Activated CD8-positive, alpha-beta T cell treated with anti-CD3 and anti-CD28 coated beads, Interleukin-2, amount 10 ng/mL, durations not matched to agents 7 days and 5 days (primary cell): ENCODE measurements at regions of chr2 and their contacts with region 1.

Region 1: DNA sequence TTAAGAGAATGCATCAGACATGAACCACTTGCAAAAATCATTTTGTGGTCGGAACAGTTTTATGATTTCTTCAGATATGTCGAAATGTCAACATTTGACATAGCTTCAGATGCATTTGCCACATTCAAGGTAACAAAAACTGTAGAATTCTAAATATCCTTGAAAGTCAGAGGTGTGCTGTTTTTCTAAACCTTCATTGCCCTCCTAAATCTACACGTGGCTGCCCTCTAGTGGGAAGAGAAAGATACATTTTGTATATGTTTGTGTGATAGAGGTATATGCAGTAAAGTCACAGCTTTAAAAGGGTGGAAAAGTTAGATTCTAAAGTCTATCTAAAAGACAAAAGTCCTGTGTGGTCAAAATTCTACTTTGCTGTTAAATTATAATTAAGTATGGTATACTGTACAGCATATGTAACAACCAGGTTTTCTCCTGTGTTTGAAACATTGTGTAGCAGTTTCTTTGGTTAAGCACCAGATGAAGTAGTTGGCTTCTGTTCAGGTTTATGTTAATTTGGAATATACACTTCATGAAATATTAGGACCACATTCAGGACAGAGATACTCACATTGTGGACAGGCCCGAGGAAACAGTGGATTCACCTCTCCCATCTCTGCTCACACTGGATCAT is 65.9 kb upstream of the ITM2C start:
- DNase-seq: peak; percentile 74
- ATAC-seq: no peak
- H3K4me3 Mint-ChIP-seq: no peak overlapping the region
- H3K27ac Mint-ChIP-seq: peak overlapping the region; percentile 63
- H3K4me1 Mint-ChIP-seq: peaks cover 43% of the 10 kb centered on the region
- H3K27me3 Mint-ChIP-seq: no peaks in the 10 kb centered on the region

Region 2: GRCh38 chr2:230643576-230644291 is 155.2 kb before region 1 on chr2:
- CTCF ChIA-PET with region 1: interaction called, 21 read pairs
- POLR2A ChIA-PET with region 1: no interaction called
- DNase-seq: peak; percentile 70
- ATAC-seq: peak; percentile 96
- H3K4me3 Mint-ChIP-seq: peak overlapping the region; percentile 57
- H3K27ac Mint-ChIP-seq: peak overlapping the region; percentile 97
- H3K4me1 Mint-ChIP-seq: peaks cover 41% of the 10 kb centered on the region
- H3K27me3 Mint-ChIP-seq: no peaks in the 10 kb centered on the region

Region 3: DNA sequence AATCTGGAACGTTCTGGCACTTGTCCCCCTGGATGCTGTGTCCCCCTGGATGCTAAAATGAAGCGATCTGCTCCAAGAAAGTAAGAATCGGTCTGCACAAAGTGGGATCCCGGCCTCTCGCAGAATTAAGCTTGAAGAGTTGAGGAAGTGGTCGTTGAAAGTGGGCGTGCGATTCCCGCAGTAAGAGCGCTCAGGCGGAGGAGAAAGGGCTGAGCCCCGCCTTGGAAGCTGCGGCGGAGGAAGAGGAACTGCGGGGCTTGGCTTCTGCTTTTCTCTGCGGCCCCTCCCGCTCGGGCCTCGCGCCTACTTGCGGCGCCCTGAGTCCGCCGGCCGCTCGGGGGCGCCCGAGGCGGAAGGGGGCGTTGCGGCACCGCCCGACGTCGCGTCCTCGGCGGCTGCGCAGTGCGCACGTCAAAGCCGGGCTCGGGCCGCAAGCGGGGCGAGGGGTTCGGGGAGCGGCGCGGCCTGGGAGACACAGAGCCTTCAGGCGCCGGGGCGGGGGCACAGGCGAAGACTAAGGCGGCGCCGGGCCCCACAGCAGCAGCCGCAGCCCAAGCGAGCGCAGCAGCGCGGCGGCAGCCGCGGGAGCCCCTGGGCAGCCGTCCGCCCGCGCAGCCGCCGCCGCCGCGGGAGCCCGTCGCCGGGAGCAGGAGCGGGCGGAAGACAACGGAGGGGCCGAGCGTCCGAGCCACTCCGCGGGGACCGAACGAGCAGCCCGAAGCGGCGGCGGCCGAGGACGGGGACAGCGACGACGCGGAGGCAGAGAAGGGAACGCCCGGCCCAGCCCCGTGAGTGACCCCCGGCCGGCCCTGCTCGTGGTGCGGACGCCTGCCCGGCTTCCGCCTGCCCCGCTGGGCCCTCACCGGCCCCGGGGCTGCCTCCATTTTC is 86.2 kb before region 1 on chr2 and contains the start of gene CAB39:
- CTCF ChIA-PET with region 1: interaction called, 53 read pairs
- POLR2A ChIA-PET with region 1: interaction called, 12 read pairs
- DNase-seq: peak; percentile 89
- ATAC-seq: peak; percentile 89
- H3K4me3 Mint-ChIP-seq: peak within 1 kb of the TSS; percentile 99
- H3K27ac Mint-ChIP-seq: peak within 1 kb of the TSS; percentile 98
- H3K4me1 Mint-ChIP-seq: peaks cover 40% of the 10 kb centered on the region
- H3K27me3 Mint-ChIP-seq: no peaks in the 10 kb centered on the region
- total RNA-seq, gene CAB39: 175 to 178 TPM

Region 4: DNA sequence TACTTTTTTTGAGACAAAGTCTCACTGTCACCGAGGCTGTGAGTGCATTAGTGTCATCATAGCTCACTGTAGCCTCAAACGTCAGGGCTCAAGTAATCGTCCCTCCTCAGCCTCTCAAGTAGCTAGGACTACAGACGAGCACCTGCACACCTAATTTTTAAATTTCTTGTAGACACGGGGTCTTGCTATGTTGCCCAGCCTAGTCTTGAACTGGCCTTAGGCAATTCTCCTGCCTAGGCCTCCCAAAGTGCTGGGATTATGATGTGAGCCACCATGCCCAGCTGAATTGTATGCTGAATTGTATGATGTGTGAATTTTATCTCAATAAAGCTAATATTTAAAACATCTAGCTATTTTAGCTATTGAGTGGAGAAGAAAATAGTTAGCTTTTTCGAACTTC is 67.4 kb before region 1 on chr2:
- CTCF ChIA-PET with region 1: interaction called, 14 read pairs
- POLR2A ChIA-PET with region 1: no interaction called
- DNase-seq: no peak
- ATAC-seq: no peak
- H3K4me3 Mint-ChIP-seq: no peak overlapping the region
- H3K27ac Mint-ChIP-seq: no peak overlapping the region
- H3K4me1 Mint-ChIP-seq: peaks cover 65% of the 10 kb centered on the region
- H3K27me3 Mint-ChIP-seq: no peaks in the 10 kb centered on the region

Region 5: GRCh38 chr2:230774348-230774951 is 24.4 kb before region 1 on chr2:
- CTCF ChIA-PET with region 1: interaction called, 23 read pairs
- POLR2A ChIA-PET with region 1: interaction called, 5 read pairs
- DNase-seq: no peak
- ATAC-seq: no peak
- H3K4me3 Mint-ChIP-seq: no peak overlapping the region
- H3K27ac Mint-ChIP-seq: no peak overlapping the region
- H3K4me1 Mint-ChIP-seq: peaks cover 85% of the 10 kb centered on the region
- H3K27me3 Mint-ChIP-seq: no peaks in the 10 kb centered on the region

Region 6: DNA sequence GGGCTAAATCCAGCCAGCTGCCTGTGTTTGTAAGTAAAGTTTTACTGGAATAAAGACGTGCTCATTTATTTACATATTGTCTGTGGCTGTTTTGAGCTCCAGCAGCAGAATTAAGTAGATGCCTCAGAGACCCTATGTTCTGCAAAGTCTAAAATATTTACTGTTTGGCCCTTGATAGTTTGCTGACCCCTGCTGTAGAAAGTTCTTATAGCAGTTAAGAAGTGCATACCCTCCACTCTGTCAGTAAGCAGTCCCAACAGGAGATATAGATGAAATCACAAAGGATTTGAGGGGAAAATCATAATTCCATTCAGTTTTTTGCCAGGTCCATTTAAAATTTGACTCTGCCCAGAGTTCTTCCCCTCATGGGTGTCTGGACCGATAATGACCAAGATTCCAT is 15.7 kb after region 1 on chr2:
- CTCF ChIA-PET with region 1: interaction called, 61 read pairs
- POLR2A ChIA-PET with region 1: no interaction called
- DNase-seq: no peak
- ATAC-seq: peak; percentile 49
- H3K4me3 Mint-ChIP-seq: no peak overlapping the region
- H3K27ac Mint-ChIP-seq: peak overlapping the region; percentile 28
- H3K4me1 Mint-ChIP-seq: peaks cover 30% of the 10 kb centered on the region
- H3K27me3 Mint-ChIP-seq: no peaks in the 10 kb centered on the region